Kidney (tissue), 22 donors: ENCODE measurements at regions of chr1 and their contacts with region 1.

Region 1: GRCh38 chr1:204494281-204495077 is at the start of gene PIK3C2B:
- DNase-seq: peak; percentile 88 to 97 (median 93)
- H3K4me3 ChIP-seq: peak within 1 kb of the TSS; percentile 78 to 92 (median 84)
- H3K27ac ChIP-seq: peak within 1 kb of the TSS; percentile 78 to 80
- H3K4me1 ChIP-seq: peaks cover 5 to 22% (median 7%) of the 10 kb centered on the region in 3 donors
- H3K27me3 ChIP-seq: no peaks in the 10 kb centered on the region
- CTCF ChIP-seq: peak; percentile 17
- total RNA-seq, gene PIK3C2B: 36.4 TPM

Region 2: GRCh38 chr1:204446370-204447111 is 47.9 kb before region 1 on chr1:
- intact Hi-C with region 1: loop called (anchors 5 kb)
- DNase-seq: peak; percentile 83 to 95 (median 92)
- H3K4me3 ChIP-seq: no peak overlapping the region
- H3K27ac ChIP-seq: no peak overlapping the region
- H3K4me1 ChIP-seq: peaks cover 0 to 23% (median 7%) of the 10 kb centered on the region in 3 donors
- H3K27me3 ChIP-seq: no peaks in the 10 kb centered on the region
- CTCF ChIP-seq: peak; percentile 66

Region 3: GRCh38 chr1:204591594-204592051 is 97.1 kb after region 1 on chr1:
- intact Hi-C with region 1: no loop called
- DNase-seq: no peak
- H3K4me3 ChIP-seq: no peak overlapping the region
- H3K27ac ChIP-seq: no peak overlapping the region
- H3K4me1 ChIP-seq: no peaks in the 10 kb centered on the region
- H3K27me3 ChIP-seq: no peaks in the 10 kb centered on the region
- CTCF ChIP-seq: no peak

Region 4: GRCh38 chr1:204763706-204764427 is 269.4 kb after region 1 on chr1:
- intact Hi-C with region 1: no loop called
- DNase-seq: peak; percentile 77 to 96 (median 78)
- H3K4me3 ChIP-seq: peak overlapping the region in 1 of 3 donors; percentile 26
- H3K27ac ChIP-seq: no peak overlapping the region
- H3K4me1 ChIP-seq: peaks cover 0 to 9% (median 6%) of the 10 kb centered on the region in 3 donors
- H3K27me3 ChIP-seq: no peaks in the 10 kb centered on the region
- CTCF ChIP-seq: peak; percentile 79